ENCODE measurements at regions of chr18 and their contacts with region 1.

Region 1: DNA sequence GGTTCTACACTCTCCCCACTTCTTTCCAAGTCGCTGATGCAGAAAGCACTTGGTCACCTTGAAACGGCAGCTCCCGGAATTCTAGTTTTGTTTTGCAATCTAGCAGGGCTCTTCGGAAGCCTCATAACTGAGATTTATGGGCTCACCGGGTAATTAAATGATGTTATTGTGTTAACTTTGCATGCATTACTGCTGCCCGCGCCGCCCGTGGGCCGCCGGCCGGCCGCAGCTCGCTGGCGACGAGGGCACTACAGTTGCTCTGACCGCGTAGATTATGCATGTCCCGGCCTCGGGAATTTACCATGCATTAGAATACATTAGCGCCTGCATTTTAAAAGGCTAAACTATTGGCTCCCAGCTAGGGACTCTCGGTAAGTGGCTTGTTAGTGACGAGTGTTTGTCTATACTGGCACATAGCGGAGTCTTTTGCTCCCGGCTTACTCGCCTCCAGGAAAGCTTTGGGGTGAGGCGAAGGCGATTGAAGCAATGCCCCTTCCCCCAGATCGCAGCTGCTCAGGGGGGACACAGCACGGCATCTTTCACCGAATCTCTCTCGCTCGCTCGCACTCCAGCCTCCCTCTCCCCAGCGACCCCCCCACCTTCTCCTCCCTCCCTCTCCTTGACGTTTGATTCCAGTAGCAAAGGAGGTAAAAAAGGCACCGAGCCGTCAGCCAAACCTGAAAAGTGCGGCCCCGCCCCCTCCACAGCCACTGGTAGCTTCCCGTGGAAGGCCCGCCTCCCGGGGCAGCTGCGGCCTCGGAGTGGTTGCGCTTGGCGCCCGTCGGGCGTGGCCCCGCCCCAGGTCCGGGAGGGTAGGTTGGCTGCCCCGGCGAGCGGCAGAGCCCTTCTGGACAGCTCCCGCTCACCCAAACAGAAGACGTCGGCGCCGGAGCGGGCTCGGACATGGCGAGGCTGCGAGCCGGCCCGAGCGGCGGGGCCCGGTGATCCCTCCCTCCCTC is at the start of gene ONECUT2:
- DNase-seq: peak; percentile 75
- H3K4me3 Mint-ChIP-seq: peak within 1 kb of the TSS; percentile 56
- H3K27ac Mint-ChIP-seq: peak within 1 kb of the TSS; percentile 72
- H3K4me1 Mint-ChIP-seq: peaks cover 18% of the 10 kb centered on the region
- H3K27me3 Mint-ChIP-seq: peaks cover 84% of the 10 kb centered on the region
- total RNA-seq, gene ONECUT2: not detected in 2 replicates

Region 2: GRCh38 chr18:55589625-55590291 is 1845.1 kb before region 1 on chr18:
- intact Hi-C with region 1: loop called (anchors 5 kb)
- DNase-seq: peak; percentile 96
- H3K4me3 Mint-ChIP-seq: peak overlapping the region; percentile 86
- H3K27ac Mint-ChIP-seq: peak overlapping the region; percentile 83
- H3K4me1 Mint-ChIP-seq: peaks cover 21% of the 10 kb centered on the region
- H3K27me3 Mint-ChIP-seq: peaks cover 30% of the 10 kb centered on the region

Region 3: GRCh38 chr18:57353940-57354461 is 80.8 kb before region 1 on chr18:
- intact Hi-C with region 1: loop called (anchors 5 kb)
- DNase-seq: peak; percentile 77
- H3K4me3 Mint-ChIP-seq: no peak overlapping the region
- H3K27ac Mint-ChIP-seq: no peak overlapping the region
- H3K4me1 Mint-ChIP-seq: peaks cover 1% of the 10 kb centered on the region
- H3K27me3 Mint-ChIP-seq: peaks cover 36% of the 10 kb centered on the region

Region 4: DNA sequence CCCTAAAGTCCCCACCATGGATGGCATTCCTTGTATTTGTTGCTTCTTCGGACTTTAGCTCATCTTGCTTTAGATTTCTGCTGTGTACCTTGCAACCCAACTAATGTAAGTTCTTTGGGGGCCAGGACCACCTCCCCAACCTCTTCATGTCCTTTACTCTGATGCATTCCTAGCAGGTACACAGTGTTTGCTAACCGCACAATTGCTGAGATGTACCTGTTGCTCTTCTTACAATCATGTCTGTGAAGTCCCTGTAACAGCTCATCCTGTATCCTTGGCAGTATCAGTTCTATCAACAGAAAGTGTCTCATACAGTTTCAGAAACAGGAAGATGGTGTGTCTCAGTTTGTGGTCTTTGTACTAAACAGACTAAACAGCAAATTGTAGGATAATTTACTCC is 58.3 kb before region 1 on chr18:
- intact Hi-C with region 1: no loop called
- DNase-seq: no peak
- H3K4me3 Mint-ChIP-seq: no peak overlapping the region
- H3K27ac Mint-ChIP-seq: no peak overlapping the region
- H3K4me1 Mint-ChIP-seq: no peaks in the 10 kb centered on the region
- H3K27me3 Mint-ChIP-seq: peaks cover 2% of the 10 kb centered on the region

Region 5: GRCh38 chr18:57803103-57803969 is 368.5 kb after region 1 on chr18 and contains the start of gene ATP8B1:
- intact Hi-C with region 1: loop called (anchors 5 kb)
- DNase-seq: no peak
- H3K4me3 Mint-ChIP-seq: peak within 1 kb of the TSS; percentile 81
- H3K27ac Mint-ChIP-seq: peak within 1 kb of the TSS; percentile 34
- H3K4me1 Mint-ChIP-seq: peaks cover 8% of the 10 kb centered on the region
- H3K27me3 Mint-ChIP-seq: peaks cover 66% of the 10 kb centered on the region
- total RNA-seq, gene ATP8B1: 0.24 TPM in 1 of 2 replicates, not detected in the other

Measured in activated CD4-positive, alpha-beta T cell treated with anti-CD3 and anti-CD28 coated beads, Interleukin-2, amount 10 ng/mL, durations not matched to agents 24 days and 14 days (primary cell).